ENCODE measurements at regions of chr12 and their contacts with region 1.

Region 1: GRCh38 chr12:104064031-104064822 is at the start of gene HCFC2:
- DNase-seq: peak; percentile 86 to 91
- ATAC-seq: peak; percentile 95 to 97 (median 97)
- H3K4me3 ChIP-seq: peak within 1 kb of the TSS; percentile 87
- H3K4me3 Mint-ChIP-seq: peak within 1 kb of the TSS; percentile 92
- H3K27ac ChIP-seq: peak within 1 kb of the TSS; percentile 66
- H3K27ac Mint-ChIP-seq: peak within 1 kb of the TSS; percentile 82 to 93
- H3K4me1 ChIP-seq: peaks cover 14% of the 10 kb centered on the region
- H3K4me1 Mint-ChIP-seq: peaks cover 13 to 22% of the 10 kb centered on the region in 2 donors
- H3K27me3 ChIP-seq: no peaks in the 10 kb centered on the region
- H3K27me3 Mint-ChIP-seq: peaks cover 8 to 9% of the 10 kb centered on the region in 2 donors
- CTCF ChIP-seq: no peak
- total RNA-seq, gene HCFC2: 20.3 to 24.4 (median 23.8) TPM

Region 2: DNA sequence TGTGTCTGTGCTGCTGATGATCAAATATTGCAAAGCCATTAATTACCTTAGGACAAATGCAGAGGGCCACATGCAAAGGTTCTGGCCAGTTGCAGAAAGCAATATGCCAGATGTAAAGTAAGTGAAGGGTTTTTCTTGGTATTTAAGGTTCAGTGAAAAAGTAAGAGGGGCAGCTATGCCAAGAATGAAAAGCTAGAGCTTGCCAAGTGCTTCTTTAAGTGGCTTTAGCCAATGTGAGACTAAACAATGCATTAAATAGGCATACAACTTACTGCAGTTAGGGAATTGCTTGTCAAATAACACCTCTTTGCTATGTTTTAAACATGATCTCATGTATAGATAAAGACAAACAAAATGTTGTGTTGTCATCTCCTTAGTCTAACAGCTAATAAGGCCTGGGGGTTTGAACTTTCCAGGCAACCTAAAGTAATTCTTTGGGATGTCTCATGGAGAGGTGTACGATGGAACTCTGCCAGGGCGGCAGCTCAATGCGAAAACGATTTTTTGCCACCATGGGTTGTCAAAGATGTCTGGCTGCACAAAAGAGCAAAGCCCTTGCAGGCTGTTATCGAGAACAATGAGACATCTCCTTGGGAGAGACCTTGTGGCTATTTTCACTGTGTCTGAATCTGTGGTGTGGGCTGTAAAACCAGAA is 1595.8 kb before region 1 on chr12:
- intact Hi-C with region 1: no loop called
- DNase-seq: no peak
- ATAC-seq: no peak
- H3K4me3 ChIP-seq: no peak overlapping the region
- H3K4me3 Mint-ChIP-seq: no peak overlapping the region
- H3K27ac ChIP-seq: no peak overlapping the region
- H3K27ac Mint-ChIP-seq: no peak overlapping the region
- H3K4me1 ChIP-seq: no peaks in the 10 kb centered on the region
- H3K4me1 Mint-ChIP-seq: no peaks in the 10 kb centered on the region
- H3K27me3 ChIP-seq: no peaks in the 10 kb centered on the region
- H3K27me3 Mint-ChIP-seq: peaks cover 13 to 45% of the 10 kb centered on the region in 2 donors
- CTCF ChIP-seq: no peak

Region 3: GRCh38 chr12:104137913-104138796 is 73.9 kb after region 1 on chr12 and contains the start of gene NFYB:
- intact Hi-C with region 1: loop called (anchors 2 kb)
- DNase-seq: peak; percentile 88 to 97
- ATAC-seq: peak; percentile 94 to 98 (median 94)
- H3K4me3 ChIP-seq: peak within 1 kb of the TSS; percentile 54
- H3K4me3 Mint-ChIP-seq: peak within 1 kb of the TSS; percentile 74
- H3K27ac ChIP-seq: peak within 1 kb of the TSS; percentile 60
- H3K27ac Mint-ChIP-seq: peak within 1 kb of the TSS; percentile 28 to 63
- H3K4me1 ChIP-seq: peaks cover 12% of the 10 kb centered on the region
- H3K4me1 Mint-ChIP-seq: no peaks in the 10 kb centered on the region
- H3K27me3 ChIP-seq: no peaks in the 10 kb centered on the region
- H3K27me3 Mint-ChIP-seq: peaks cover 0 to 3% of the 10 kb centered on the region in 2 donors
- CTCF ChIP-seq: no peak
- total RNA-seq, gene NFYB: 13.3 to 17.4 (median 13.6) TPM

Measured in natural killer cell (primary cell).